ENCODE measurements at regions of chr17 and their contacts with region 1.

Region 1: GRCh38 chr17:7862692-7863437 is 5.1 kb downstream of the CYB5D1 start:
- DNase-seq: peak in 1 of 2 experiments; percentile 57
- H3K4me3 ChIP-seq: no peak overlapping the region
- H3K4me3 Mint-ChIP-seq: peak overlapping the region; percentile 54
- H3K27ac Mint-ChIP-seq: peak overlapping the region; percentile 10
- H3K4me1 ChIP-seq: peaks cover 9% of the 10 kb centered on the region; the same call in 1 of the 2 replicates
- H3K4me1 Mint-ChIP-seq: peaks cover 15% of the 10 kb centered on the region
- H3K27me3 ChIP-seq: no peaks in the 10 kb centered on the region
- H3K27me3 Mint-ChIP-seq: no peaks in the 10 kb centered on the region
- CTCF ChIP-seq: peak; percentile 46 to 67

Region 2: DNA sequence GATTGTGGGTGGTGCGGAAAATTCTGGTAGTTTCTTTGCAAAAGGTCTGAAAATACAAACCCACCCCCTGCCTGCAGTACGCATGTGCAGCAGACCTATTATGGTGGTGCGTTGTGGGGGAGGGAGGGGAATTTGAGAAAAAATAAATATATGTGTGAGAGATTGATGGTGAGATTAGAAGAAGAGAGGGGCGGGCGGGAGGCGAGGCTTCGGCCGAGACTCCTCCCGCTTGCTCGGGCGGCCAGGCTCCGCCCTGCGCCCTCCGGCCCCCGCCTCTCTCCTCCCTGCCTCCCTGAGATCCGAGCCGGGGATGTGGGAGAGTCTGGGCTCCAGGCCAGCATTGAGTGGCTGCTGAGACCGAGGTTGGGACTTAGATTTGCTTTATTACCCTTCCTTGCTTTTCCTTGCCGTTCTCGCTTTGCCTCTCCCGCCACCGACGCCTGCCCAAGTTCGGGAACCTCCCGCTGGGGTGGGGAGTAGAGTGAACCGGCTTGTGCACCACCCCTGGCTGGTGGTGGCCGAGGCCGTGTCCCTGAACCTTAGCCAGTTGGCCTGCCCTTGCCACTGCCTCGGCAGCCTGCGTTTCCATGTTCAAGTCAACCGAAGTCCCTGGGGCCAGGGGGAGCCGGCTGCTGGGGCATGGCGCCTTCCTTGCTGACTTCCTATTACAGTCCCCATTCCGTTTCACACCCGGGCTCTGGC is 24.8 kb after region 1 on chr17:
- CTCF ChIA-PET with region 1: no interaction called
- POLR2A ChIA-PET with region 1: no interaction called
- intact Hi-C with region 1: loop called (anchors 2 kb)
- DNase-seq: peak; percentile 70 to 73
- H3K4me3 ChIP-seq: peak overlapping the region; percentile 52
- H3K4me3 Mint-ChIP-seq: no peak overlapping the region
- H3K27ac Mint-ChIP-seq: no peak overlapping the region
- H3K4me1 ChIP-seq: no peaks in the 10 kb centered on the region; the same call in 1 of the 2 replicates
- H3K4me1 Mint-ChIP-seq: no peaks in the 10 kb centered on the region
- H3K27me3 ChIP-seq: no peaks in the 10 kb centered on the region
- H3K27me3 Mint-ChIP-seq: no peaks in the 10 kb centered on the region
- CTCF ChIP-seq: no peak

Region 3: DNA sequence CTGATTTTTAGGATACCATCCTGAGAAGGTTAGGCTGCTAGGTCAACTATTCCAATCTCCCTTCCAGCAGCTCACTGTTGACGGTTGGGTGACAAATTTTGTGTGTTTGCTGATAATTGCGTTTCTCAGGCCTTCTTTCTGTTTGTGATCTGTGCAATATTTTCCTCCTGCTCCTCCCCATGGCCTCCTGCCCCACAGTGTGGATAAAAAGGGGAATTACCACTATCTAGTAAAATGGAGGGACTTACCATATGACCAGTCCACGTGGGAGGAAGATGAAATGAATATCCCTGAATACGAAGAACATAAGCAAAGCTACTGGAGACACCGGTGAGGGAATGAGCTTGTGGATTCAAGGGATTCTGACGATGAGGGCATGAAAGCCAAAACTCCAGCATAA is 34.9 kb after region 1 on chr17:
- CTCF ChIA-PET with region 1: interaction called, 8 read pairs
- POLR2A ChIA-PET with region 1: interaction called, 11 read pairs
- intact Hi-C with region 1: loop called (anchors 1 kb)
- DNase-seq: peak in 1 of 2 experiments; percentile 47
- H3K4me3 ChIP-seq: no peak overlapping the region
- H3K4me3 Mint-ChIP-seq: no peak overlapping the region
- H3K27ac Mint-ChIP-seq: peak overlapping the region; percentile 53
- H3K4me1 ChIP-seq: no peaks in the 10 kb centered on the region
- H3K4me1 Mint-ChIP-seq: peaks cover 6% of the 10 kb centered on the region
- H3K27me3 ChIP-seq: no peaks in the 10 kb centered on the region
- H3K27me3 Mint-ChIP-seq: no peaks in the 10 kb centered on the region
- CTCF ChIP-seq: peak in 1 of 2 experiments; percentile 48

Measured in Caco-2 (cell line).